GM12878 (cell line): ENCODE measurements at regions of chr11 and their contacts with region 1.

Region 1: GRCh38 chr11:95095858-95096587 is 6.4 kb downstream of the ENDOD1 start:
- DNase-seq: peak; percentile 88
- ATAC-seq: peak; percentile 83
- H3K4me3 ChIP-seq: peak overlapping the region; percentile 50; the same call in 1 of the 2 replicates
- H3K27ac ChIP-seq: peak overlapping the region; percentile 57
- H3K4me1 ChIP-seq: peaks cover 45% of the 10 kb centered on the region
- H3K27me3 ChIP-seq: no peaks in the 10 kb centered on the region
- CTCF ChIP-seq: no peak
- EP300 ChIP-seq: peak; percentile 52 to 88; a peak in 3 of 4 replicates
- POLR2A ChIP-seq: no peak
- RAD21 ChIP-seq: no peak

Region 2: GRCh38 chr11:95084509-95084908 is 11.5 kb before region 1 on chr11:
- CTCF ChIA-PET with region 1: interaction called, 12 read pairs
- POLR2A ChIA-PET with region 1: interaction called, 19 read pairs
- RAD21 ChIA-PET with region 1: interaction called, 13 read pairs
- SMC1A ChIA-PET with region 1: interaction called, 22 read pairs
- in situ Hi-C with region 1: no loop called
- intact Hi-C with region 1: no loop called
- DNase-seq: no peak
- ATAC-seq: peak; percentile 50
- H3K4me3 ChIP-seq: no peak overlapping the region
- H3K27ac ChIP-seq: no peak overlapping the region
- H3K4me1 ChIP-seq: peaks cover 5% of the 10 kb centered on the region; the same call in 1 of the 2 replicates
- H3K27me3 ChIP-seq: no peaks in the 10 kb centered on the region
- CTCF ChIP-seq: no peak
- EP300 ChIP-seq: peak in 1 of 2 experiments; percentile 24; a peak in 1 of 4 replicates
- POLR2A ChIP-seq: no peak
- RAD21 ChIP-seq: no peak

Region 3: GRCh38 chr11:95138448-95138847 is 42.4 kb after region 1 on chr11:
- CTCF ChIA-PET with region 1: interaction called, 24 read pairs
- POLR2A ChIA-PET with region 1: no interaction called
- RAD21 ChIA-PET with region 1: interaction called, 5 read pairs
- SMC1A ChIA-PET with region 1: interaction called, 41 read pairs
- in situ Hi-C with region 1: no loop called
- intact Hi-C with region 1: no loop called
- DNase-seq: no peak
- ATAC-seq: peak; percentile 97
- H3K4me3 ChIP-seq: no peak overlapping the region
- H3K27ac ChIP-seq: no peak overlapping the region
- H3K4me1 ChIP-seq: no peaks in the 10 kb centered on the region
- H3K27me3 ChIP-seq: 0 out of 4 replicates have a peak, but pooled peaks cover 0 to 2% of the 10 kb centered on the region in 2 experiments
- CTCF ChIP-seq: peak; percentile 36 to 65 (median 45); a peak in 5 of 6 replicates
- EP300 ChIP-seq: no peak
- POLR2A ChIP-seq: no peak
- RAD21 ChIP-seq: peak; percentile 84